WTC11 (cell line): ENCODE measurements at regions of chr11 and their contacts with region 1.

Region 1: DNA sequence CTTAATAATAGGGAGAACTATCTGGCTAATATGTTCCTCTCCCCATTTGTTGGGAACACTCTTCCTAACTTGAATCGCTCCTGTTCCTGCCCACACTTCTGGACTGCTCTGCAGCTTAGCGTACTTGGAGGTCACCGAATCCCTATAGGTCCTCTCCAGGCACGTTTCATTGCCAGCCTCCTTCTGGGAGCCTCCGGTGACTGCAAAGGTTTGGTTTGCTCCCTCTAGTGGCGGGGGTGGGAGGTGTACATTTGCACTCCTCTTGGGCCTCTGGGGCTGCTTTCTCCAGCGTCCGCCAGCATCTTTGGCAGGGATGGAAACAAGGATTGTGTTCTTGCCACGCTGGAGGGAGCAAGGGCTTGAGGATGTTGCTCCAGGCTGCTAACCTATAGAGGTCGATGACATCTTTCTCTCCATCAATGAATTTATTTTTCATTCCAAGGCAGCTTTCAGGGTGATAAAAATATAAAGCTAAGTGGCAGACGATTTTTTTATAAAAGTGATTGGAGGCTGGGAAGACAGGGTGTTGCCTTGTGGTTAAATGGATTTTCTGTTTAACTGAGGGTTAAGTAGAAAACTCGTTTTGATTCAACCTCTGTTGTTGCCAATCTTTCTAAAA is 48.7 kb downstream of the TSPAN18 start:
- DNase-seq: peak; percentile 78
- ATAC-seq: peak; percentile 76
- H3K4me3 Mint-ChIP-seq: no peak overlapping the region
- H3K27ac Mint-ChIP-seq: peak overlapping the region; percentile 30; the same call in 1 of the 2 replicates
- H3K4me1 Mint-ChIP-seq: peaks cover 71% of the 10 kb centered on the region
- H3K27me3 Mint-ChIP-seq: no peaks in the 10 kb centered on the region; the same call in 1 of the 2 replicates
- CTCF ChIP-seq: peak; percentile 82

Region 2: GRCh38 chr11:44634401-44635281 is 140.8 kb before region 1 on chr11:
- CTCF ChIA-PET with region 1: interaction called, 14 read pairs
- POLR2A ChIA-PET with region 1: no interaction called
- DNase-seq: peak; percentile 80
- ATAC-seq: peak; percentile 79
- H3K4me3 Mint-ChIP-seq: no peak overlapping the region
- H3K27ac Mint-ChIP-seq: no peak overlapping the region
- H3K4me1 Mint-ChIP-seq: peaks cover 29% of the 10 kb centered on the region
- H3K27me3 Mint-ChIP-seq: no peaks in the 10 kb centered on the region; the same call in 1 of the 2 replicates
- CTCF ChIP-seq: no peak

Region 3: DNA sequence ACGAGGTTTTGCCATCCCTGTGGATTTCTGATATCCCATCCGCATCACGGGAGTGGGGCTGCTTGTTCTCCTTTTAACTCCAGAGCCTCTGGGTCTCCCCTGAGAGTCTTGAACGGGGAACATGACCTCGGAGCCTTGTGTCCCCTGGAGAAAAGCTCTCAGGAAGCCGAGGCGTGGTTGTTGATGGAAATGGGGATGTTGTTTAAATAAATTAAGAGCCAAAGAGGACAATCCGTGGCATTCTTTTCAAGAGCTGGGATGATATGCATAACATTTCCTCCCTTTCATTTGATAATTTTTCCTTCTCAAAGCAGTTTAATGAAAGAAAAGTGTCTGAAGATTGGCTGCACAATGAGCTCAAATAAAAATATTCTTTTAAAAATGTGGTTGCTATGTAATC is 34.5 kb before region 1 on chr11:
- CTCF ChIA-PET with region 1: interaction called, 12 read pairs
- POLR2A ChIA-PET with region 1: no interaction called
- DNase-seq: no peak
- ATAC-seq: no peak
- H3K4me3 Mint-ChIP-seq: peak overlapping the region; percentile 34
- H3K27ac Mint-ChIP-seq: peak overlapping the region; percentile 46
- H3K4me1 Mint-ChIP-seq: peaks cover 90% of the 10 kb centered on the region
- H3K27me3 Mint-ChIP-seq: peaks cover 5% of the 10 kb centered on the region
- CTCF ChIP-seq: no peak

Region 4: GRCh38 chr11:44785856-44786606 is 10.6 kb after region 1 on chr11:
- CTCF ChIA-PET with region 1: interaction called, 31 read pairs
- POLR2A ChIA-PET with region 1: no interaction called
- DNase-seq: peak; percentile 34
- ATAC-seq: peak; percentile 63
- H3K4me3 Mint-ChIP-seq: no peak overlapping the region
- H3K27ac Mint-ChIP-seq: 0 out of 2 replicates have a peak overlapping the region, but pooled peaks have one; percentile 7
- H3K4me1 Mint-ChIP-seq: peaks cover 62% of the 10 kb centered on the region
- H3K27me3 Mint-ChIP-seq: no peaks in the 10 kb centered on the region
- CTCF ChIP-seq: no peak

Region 5: DNA sequence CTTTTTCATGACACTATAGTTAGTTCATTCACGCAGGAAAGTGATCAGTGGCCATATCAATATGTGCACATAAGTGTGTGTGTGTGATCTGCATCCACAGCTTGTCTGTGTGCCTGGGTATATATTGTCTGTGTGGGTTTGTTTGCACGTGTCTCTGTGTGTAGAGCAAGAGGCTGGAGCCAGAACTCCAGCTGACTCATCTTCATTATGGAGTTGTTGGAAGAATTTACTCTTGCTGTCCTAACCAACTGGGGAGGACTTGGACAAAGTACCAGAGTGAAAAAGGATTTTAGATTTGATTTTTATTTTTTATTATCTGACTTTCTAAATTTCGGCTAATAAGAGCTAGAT is 111.3 kb after region 1 on chr11:
- CTCF ChIA-PET with region 1: interaction called, 11 read pairs
- POLR2A ChIA-PET with region 1: no interaction called
- DNase-seq: no peak
- ATAC-seq: no peak
- H3K4me3 Mint-ChIP-seq: no peak overlapping the region
- H3K27ac Mint-ChIP-seq: 0 out of 2 replicates have a peak overlapping the region, but pooled peaks have one; percentile 29
- H3K4me1 Mint-ChIP-seq: peaks cover 46% of the 10 kb centered on the region
- H3K27me3 Mint-ChIP-seq: no peaks in the 10 kb centered on the region
- CTCF ChIP-seq: no peak

Region 6: GRCh38 chr11:45048870-45049691 is 273.6 kb after region 1 on chr11:
- CTCF ChIA-PET with region 1: no interaction called
- POLR2A ChIA-PET with region 1: no interaction called
- DNase-seq: no peak
- ATAC-seq: no peak
- H3K4me3 Mint-ChIP-seq: no peak overlapping the region
- H3K27ac Mint-ChIP-seq: no peak overlapping the region
- H3K4me1 Mint-ChIP-seq: peaks cover 14% of the 10 kb centered on the region
- H3K27me3 Mint-ChIP-seq: peaks cover 2% of the 10 kb centered on the region; the same call in 1 of the 2 replicates
- CTCF ChIP-seq: no peak